A673 (cell line): ENCODE measurements at regions of chr3 and their contacts with region 1.

Region 1: GRCh38 chr3:72901840-72902239 is 14.0 kb downstream of the GXYLT2 start:
- DNase-seq: no peak
- H3K4me3 ChIP-seq: no peak overlapping the region
- H3K27ac ChIP-seq: no peak overlapping the region
- H3K4me1 ChIP-seq: no peaks in the 10 kb centered on the region
- H3K27me3 ChIP-seq: no peaks in the 10 kb centered on the region
- CTCF ChIP-seq: no peak

Region 2: DNA sequence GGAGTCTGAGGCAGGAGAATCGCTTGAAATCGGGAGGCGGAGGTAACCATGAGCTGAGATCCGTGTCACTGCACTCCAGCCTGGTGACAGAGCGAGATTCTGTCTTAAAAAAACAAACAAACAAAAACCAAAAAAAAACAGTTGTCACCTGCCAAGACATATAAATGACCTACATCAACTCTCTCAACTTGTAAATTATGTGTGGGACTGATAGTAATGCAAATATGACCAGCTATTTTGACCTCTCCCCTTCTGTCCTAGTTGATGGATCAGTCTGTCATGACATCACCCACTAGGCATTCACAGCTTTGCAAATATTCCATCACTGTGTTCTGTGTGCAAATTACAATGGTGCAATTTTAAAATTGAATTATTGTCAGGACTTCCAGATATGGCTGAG is 335.0 kb after region 1 on chr3:
- CTCF ChIA-PET with region 1: no interaction called
- POLR2A ChIA-PET with region 1: interaction called, 15 read pairs
- intact Hi-C with region 1: no loop called
- DNase-seq: no peak
- H3K4me3 ChIP-seq: no peak overlapping the region
- H3K27ac ChIP-seq: no peak overlapping the region
- H3K4me1 ChIP-seq: no peaks in the 10 kb centered on the region
- H3K27me3 ChIP-seq: no peaks in the 10 kb centered on the region
- CTCF ChIP-seq: no peak